ENCODE measurements at regions of chr16 and their contacts with region 1.

Region 1: DNA sequence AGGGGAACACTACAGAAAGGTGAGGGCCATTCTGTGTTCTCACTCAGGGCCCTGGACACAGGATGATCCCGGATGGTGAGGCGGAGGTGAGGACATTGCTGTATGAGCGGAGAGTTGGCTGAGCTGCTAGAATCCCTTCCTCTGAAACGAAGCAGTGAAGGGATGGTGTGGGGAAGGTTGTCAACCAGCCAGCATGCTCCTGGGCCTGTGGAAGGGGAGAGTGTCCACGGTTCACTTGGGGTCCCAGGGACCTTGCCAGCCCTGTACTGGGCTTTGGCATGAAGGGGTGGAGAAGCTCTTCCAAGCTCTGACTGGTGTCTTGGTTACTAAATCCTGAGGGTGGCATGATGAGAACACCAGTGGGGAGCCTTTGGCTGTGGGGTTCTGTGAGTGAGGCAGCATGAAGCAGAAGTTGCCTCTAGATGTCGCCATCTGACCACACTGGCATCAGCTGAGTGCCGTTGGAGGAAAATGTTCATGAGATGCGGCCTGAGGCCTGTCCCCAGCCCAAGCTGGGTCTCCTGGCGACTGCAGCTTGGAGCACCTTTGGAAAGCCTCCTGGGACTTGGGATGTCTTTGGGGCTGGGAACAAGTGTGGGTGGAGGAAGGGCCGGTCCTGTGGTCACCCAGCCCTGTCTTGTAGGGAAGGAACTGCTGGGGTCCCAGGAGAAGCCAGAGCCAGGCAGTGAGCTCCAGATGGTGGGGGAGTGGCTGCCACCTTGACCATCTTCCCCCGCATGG is 14.8 kb downstream of the PDP2 start:
- DNase-seq: peak; percentile 77
- H3K4me3 Mint-ChIP-seq: no peak overlapping the region
- H3K27ac Mint-ChIP-seq: no peak overlapping the region
- H3K4me1 Mint-ChIP-seq: peaks cover 33% of the 10 kb centered on the region
- H3K27me3 Mint-ChIP-seq: no peaks in the 10 kb centered on the region
- CTCF ChIP-seq: peak; percentile 94

Region 2: GRCh38 chr16:66928702-66929388 is 33.7 kb after region 1 on chr16:
- CTCF ChIA-PET with region 1: interaction called, 23 read pairs
- intact Hi-C with region 1: loop called (anchors 2 kb)
- DNase-seq: peak; percentile 49
- H3K4me3 Mint-ChIP-seq: no peak overlapping the region
- H3K27ac Mint-ChIP-seq: no peak overlapping the region
- H3K4me1 Mint-ChIP-seq: peaks cover 64% of the 10 kb centered on the region
- H3K27me3 Mint-ChIP-seq: peaks cover 26% of the 10 kb centered on the region
- CTCF ChIP-seq: peak; percentile 23

Region 3: DNA sequence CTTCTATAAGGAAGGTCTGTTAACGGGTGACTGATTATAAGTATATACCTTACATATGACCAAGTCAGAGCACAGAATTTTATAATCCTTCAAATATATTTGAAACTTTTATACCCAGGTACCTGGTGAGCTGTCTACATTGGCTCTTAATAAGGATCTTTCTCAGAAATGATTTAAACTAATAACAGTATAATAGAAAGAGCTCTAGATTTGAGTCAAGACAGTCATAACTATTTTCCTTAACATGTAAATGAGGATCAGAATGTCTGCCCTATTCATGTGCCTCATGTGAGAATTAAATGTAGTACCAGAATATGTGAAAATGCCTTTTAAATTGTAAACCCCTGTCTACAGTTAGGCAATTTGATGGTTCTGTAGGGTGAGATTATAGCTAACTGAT is 148.3 kb after region 1 on chr16:
- CTCF ChIA-PET with region 1: no interaction called
- intact Hi-C with region 1: no loop called
- DNase-seq: no peak
- H3K4me3 Mint-ChIP-seq: no peak overlapping the region
- H3K27ac Mint-ChIP-seq: no peak overlapping the region
- H3K4me1 Mint-ChIP-seq: peaks cover 12% of the 10 kb centered on the region
- H3K27me3 Mint-ChIP-seq: no peaks in the 10 kb centered on the region
- CTCF ChIP-seq: no peak